ENCODE measurements at regions of chr6 and their contacts with region 1.

Region 1: GRCh38 chr6:100808638-100809275 is 72.4 kb downstream of the ASCC3 start:
- DNase-seq: peak; percentile 35
- H3K4me3 Mint-ChIP-seq: no peak overlapping the region
- H3K27ac Mint-ChIP-seq: no peak overlapping the region
- H3K4me1 Mint-ChIP-seq: peaks cover 15% of the 10 kb centered on the region
- H3K27me3 Mint-ChIP-seq: no peaks in the 10 kb centered on the region
- CTCF ChIP-seq: no peak

Region 2: GRCh38 chr6:100923481-100924165 is 114.9 kb after region 1 on chr6:
- CTCF ChIA-PET with region 1: no interaction called
- POLR2A ChIA-PET with region 1: no interaction called
- intact Hi-C with region 1: loop called (anchors 5 kb)
- DNase-seq: no peak
- H3K4me3 Mint-ChIP-seq: no peak overlapping the region
- H3K27ac Mint-ChIP-seq: no peak overlapping the region
- H3K4me1 Mint-ChIP-seq: peaks cover 14% of the 10 kb centered on the region
- H3K27me3 Mint-ChIP-seq: no peaks in the 10 kb centered on the region
- CTCF ChIP-seq: no peak